ENCODE measurements at regions of chr19 and their contacts with region 1.

Region 1: DNA sequence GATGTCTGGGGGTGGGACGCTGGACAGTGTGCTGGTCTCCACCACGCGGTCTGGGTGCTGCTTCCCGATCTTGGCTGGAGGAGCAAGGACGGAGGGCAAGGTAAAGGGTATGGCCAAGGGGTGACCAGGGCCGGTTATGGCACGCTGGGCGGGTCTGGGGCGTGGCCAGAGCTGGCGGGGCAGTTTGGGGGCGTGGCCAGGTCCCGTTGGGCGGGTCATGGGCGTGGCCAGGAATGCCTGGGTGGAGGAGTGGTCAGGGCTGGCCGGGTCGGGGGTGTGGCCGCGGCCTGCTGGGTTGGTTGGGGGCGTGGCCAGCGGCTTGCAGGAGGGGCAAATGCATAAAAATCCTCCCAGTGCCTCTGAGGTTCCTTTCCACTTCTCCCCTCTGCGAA is 19.2 kb downstream of the GPX4 start:
- DNase-seq: no peak
- H3K4me3 ChIP-seq: no peak overlapping the region
- H3K27ac ChIP-seq: no peak overlapping the region
- H3K4me1 ChIP-seq: no peaks in the 10 kb centered on the region
- H3K27me3 ChIP-seq: no peaks in the 10 kb centered on the region
- CTCF ChIP-seq: no peak

Region 2: GRCh38 chr19:1172363-1173158 is 49.6 kb after region 1 on chr19:
- intact Hi-C with region 1: no loop called
- DNase-seq: no peak
- H3K4me3 ChIP-seq: peak overlapping the region; percentile 94
- H3K27ac ChIP-seq: peak overlapping the region; percentile 94
- H3K4me1 ChIP-seq: peaks cover 39% of the 10 kb centered on the region
- H3K27me3 ChIP-seq: no peaks in the 10 kb centered on the region
- CTCF ChIP-seq: no peak

Region 3: DNA sequence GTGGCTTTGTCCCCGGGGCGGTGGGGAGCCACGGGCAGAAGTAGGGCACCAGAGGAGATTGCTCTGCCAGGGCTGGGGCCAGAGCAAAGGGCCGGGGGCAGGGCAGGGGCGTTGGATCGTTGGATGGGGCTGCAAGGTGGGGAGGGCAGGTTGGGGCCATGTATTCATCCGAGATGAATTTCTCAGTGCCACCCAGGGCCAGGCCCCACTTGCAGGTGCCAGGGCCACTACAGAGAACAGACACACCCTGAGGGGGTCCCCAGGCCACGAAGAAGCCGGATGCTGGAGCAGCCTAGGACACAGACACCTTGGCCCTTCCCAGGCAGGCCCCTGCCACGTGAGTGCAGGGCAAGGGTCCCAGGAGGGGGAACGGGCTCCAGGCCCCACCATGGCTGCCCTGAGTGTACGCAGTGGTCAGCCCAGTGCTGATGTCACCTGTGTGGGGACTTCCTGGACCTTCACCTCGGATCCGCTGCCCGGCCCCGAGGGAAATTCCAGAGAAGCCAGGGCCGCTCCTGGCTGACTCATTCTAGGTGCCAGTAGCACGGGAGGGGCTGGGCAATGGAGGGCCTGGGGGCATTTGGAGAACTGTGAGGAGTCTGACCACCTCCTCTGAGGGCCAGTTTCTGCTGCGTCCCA is 60.7 kb after region 1 on chr19:
- intact Hi-C with region 1: loop called (anchors 10 kb)
- DNase-seq: no peak
- H3K4me3 ChIP-seq: no peak overlapping the region
- H3K27ac ChIP-seq: no peak overlapping the region
- H3K4me1 ChIP-seq: peaks cover 7% of the 10 kb centered on the region
- H3K27me3 ChIP-seq: peaks cover 4% of the 10 kb centered on the region
- CTCF ChIP-seq: no peak

Measured in left ventricle myocardium inferior (tissue), 1 donor.